ENCODE measurements at regions of chr4 and their contacts with region 1.

Region 1: DNA sequence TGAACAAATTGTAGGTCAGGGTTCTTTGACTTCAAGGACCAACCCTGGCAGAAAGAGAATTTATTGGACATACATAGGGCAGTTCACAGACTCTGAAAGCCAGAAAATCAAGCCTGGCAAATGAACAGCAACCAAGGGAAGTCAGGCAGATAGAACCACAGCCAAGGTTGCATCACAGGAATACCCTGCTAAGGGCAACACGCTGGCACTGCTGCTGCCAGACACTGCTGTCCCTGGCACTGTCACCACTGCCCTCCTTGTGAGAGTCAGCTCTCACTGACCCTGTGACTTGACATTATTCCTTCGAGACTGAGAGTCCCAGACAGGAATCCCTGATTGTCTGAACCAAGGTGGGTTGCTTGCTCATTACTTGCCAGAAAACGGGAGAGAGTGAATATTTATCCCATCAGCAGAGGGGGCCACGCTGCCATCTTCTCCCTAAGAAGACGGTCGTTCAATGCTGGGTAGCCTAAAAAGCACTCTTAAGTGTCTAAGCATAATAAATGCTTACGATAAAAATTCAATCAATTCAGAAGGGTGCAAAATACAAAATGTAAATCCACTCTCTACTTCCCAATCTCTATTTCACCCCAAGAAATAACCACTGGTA is 23.2 kb upstream of the PTTG2 start:
- DNase-seq: peak; percentile 62
- ATAC-seq: peak; percentile 95

Region 2: GRCh38 chr4:37909332-37910090 is 27.5 kb before region 1 on chr4:
- intact Hi-C with region 1: loop called (anchors 2 kb)
- DNase-seq: no peak
- ATAC-seq: peak; percentile 82

Region 3: DNA sequence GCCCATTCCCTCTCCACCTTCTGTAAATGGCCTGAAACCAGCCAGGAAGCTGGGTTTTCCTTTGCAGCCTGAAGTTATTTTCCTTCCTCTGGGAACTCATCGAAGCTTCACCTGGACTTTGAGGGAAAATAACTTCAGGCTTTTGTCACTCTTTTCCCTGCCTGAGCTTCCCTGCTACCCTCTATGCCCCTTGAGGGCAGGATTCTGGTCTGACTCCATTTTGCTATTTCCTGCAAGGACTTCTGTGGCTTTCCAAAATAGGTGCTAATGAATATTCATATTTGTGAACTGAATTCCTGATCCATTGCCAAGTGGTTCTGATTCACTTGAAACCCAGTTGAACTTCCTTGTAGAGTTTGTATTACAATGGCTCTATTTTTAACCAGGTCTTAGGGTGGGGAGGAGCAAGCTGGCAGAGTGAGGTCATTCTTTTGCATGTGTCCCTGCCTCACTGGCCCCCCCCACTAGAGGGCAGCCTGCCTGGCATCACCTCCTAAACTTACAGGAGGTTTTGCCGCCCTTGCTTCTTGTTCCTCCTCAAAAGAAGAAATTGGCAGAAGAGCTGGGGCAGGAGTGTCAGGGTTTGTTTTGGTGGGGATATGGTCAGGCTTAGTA is 33.6 kb after region 1 on chr4:
- intact Hi-C with region 1: loop called (anchors 5 kb)
- DNase-seq: peak; percentile 89
- ATAC-seq: peak; percentile 77

Measured in Right ventricle myocardium inferior (tissue), 1 donor.